ENCODE measurements at regions of chrX and their contacts with region 1.

Region 1: DNA sequence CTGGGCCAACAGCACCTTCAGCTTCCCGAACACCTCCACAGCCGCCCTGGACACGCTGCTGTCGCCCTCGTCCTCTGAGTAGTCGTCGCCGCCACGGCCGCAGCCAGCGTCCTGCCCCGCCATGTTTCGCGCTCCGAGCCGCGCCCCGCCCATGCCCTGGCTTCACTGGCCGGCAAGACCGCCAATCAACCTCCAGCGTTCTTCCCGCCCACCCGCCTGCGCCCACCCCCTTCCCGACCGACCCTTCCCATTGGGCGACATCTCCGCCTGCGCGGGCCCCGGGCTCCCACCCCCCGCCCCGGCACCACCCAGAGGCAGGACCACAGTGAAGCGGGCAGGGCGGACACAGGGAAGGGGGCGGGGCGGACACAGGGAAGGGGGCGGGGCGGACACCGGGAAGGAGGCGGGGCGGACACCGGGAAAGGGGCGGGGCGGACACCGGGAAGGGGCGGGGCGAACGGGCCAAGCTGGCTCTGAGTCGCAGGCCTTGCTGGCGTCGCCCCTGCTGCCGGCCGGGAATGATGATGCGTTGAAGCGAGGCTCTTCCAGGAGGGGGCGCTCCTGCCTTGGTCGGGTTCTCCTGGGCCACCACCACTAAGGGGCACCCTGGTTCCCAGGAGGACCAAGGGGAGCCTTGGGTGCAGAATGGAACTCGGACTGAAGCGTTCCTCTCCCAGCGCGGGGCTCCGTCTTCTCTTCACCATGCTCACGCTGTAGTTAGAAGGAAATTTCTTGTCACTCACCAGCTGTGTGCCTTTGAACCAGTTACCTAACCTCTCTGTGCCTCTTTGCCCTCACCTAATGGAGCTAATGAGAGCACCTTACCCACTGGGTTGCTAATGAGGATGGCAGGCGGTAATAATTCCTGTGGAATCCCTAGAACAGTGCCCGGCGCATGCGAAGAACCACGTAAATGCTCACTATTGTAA is at the start of gene HAUS7:
- DNase-seq: peak; percentile 61 to 94
- H3K4me3 ChIP-seq: peak within 1 kb of the TSS; percentile 55 to 69
- H3K27ac ChIP-seq: peak within 1 kb of the TSS; percentile 74 to 80
- H3K4me1 ChIP-seq: peaks cover 0 to 22% of the 10 kb centered on the region in 2 donors
- H3K27me3 ChIP-seq: no peaks in the 10 kb centered on the region
- CTCF ChIP-seq: peak; percentile 62 to 82 (median 81)
- total RNA-seq, gene HAUS7: 22.5 TPM

Region 2: GRCh38 chrX:153434801-153435200 is 35.9 kb before region 1 on chrX:
- intact Hi-C with region 1: no loop called
- DNase-seq: no peak
- H3K4me3 ChIP-seq: no peak overlapping the region
- H3K27ac ChIP-seq: no peak overlapping the region
- H3K4me1 ChIP-seq: no peaks in the 10 kb centered on the region
- H3K27me3 ChIP-seq: no peaks in the 10 kb centered on the region
- CTCF ChIP-seq: no peak

Region 3: DNA sequence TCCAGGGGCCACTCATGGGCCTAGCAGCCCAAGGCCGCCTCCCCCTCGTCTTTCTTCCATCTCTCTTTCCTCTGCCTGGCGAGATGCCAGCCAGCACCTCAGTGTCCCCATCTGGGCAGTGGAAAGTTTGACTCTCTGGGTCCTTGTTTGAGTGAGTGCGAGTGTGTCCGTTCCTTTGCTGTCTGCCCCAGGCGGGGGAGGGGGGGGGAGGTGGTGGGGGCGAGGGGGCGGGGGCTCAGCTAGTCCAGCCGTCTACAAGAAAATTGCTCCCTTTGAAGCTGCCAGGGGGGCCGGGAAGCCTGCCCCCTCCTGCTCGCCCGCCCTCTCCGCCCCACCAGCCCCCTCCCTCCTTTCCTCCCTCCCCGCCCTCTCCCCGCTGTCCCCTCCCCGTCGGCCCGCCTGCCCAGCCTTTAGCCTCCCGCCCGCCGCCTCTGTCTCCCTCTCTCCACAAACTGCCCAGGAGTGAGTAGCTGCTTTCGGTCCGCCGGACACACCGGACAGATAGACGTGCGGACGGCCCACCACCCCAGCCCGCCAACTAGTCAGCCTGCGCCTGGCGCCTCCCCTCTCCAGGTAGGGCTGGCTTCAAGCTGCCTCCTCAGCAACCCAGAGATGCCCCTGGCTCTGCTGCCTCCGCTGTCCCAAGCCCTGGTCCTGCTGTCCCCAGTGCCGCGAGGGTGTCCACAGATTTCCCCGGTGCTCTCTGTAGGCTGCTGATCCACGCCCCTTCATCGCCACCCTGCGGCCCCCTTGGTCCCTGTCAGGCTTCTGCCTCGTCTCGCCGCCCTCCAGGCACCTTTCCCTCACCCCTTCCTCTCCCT is 24.1 kb after region 1 on chrX and contains the start of gene BGN:
- intact Hi-C with region 1: loop called (anchors 1 kb)
- DNase-seq: peak in 1 of 2 donors; percentile 85
- H3K4me3 ChIP-seq: peak within 1 kb of the TSS; percentile 48 to 75
- H3K27ac ChIP-seq: peak within 1 kb of the TSS; percentile 76 to 87
- H3K4me1 ChIP-seq: peaks cover 14 to 22% of the 10 kb centered on the region in 2 donors
- H3K27me3 ChIP-seq: no peaks in the 10 kb centered on the region
- CTCF ChIP-seq: peak in 2 of 3 experiments; percentile 27 to 42
- total RNA-seq, gene BGN: 1,387 TPM

Region 4: DNA sequence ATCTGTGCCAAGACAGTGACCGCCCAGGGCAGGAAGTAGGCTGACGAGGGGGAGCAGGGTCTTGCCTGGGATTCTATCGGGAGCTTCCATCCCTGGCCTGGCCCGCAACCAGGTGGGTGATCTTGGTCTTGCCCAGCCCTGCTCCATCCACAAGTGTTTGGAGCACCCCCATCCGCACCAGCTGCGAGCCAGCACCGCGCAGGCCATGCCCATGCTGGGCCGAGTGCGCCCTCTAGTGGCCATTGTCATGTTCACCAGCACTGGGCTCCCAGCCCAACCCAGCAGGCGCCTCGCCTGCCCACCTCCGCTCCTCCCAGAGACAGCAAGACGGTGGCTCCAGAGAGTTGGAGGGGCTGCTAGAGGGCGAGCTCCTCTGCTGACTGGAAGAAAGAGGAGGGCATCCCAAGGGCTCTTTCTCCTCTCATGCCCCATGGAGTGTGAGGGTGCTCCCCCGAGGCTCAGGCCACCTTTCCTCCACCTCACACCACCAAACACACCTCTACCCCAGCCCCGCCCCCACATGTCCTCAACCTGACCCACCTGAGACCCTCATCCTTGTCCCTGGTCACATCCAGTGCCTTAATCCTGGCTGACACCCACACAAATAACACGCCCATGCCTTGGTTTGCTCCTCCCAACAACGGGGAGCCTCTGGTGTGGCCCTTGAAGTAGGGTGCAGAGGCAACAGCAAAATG is 36.9 kb after region 1 on chrX:
- intact Hi-C with region 1: loop called (anchors 1 kb)
- DNase-seq: peak in 1 of 2 donors; percentile 88
- H3K4me3 ChIP-seq: no peak overlapping the region
- H3K27ac ChIP-seq: peak overlapping the region in 1 of 2 donors; percentile 3
- H3K4me1 ChIP-seq: peaks cover 4 to 6% of the 10 kb centered on the region in 2 donors
- H3K27me3 ChIP-seq: no peaks in the 10 kb centered on the region
- CTCF ChIP-seq: peak; percentile 86 to 91 (median 87)

Region 5: DNA sequence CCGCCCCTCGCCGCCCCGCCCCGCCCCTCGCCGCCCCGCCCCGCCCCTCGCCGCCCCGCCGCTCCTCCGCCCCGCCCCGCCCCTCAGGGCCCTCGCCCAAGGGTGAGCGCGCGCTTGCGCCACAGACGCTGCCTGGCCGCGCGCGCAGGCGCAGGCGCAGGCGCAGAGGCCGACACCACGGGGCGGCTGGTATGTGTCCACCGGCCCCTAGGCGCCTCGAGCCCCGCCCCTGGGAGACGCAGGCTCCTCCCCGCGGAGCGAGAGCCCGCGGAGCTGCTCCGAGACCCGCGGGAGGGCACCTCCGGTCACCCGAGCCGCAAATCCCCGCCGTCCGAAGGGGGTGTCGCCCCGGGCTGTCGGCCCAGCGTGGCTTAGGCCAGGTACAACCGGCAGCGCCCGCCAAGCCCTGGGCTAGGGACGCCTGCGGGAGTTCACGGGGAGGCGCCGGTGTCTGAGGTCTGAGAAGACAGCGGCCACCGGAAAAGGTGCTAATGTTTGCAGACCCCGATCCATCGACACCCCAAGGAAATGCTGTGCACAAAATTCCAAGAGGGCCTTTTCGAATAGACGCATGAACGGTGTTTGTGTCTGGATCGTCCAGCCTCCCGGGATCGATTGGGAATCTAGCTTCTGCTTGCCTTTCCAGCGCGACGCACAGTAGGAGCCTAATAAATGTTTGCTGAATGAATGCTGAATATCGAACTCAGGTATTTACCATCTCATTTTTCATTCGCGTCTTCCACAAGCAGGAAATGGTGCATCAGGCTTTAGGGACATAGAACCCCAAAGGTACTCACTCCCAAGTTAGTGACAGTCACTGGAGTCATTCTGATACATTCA is 128.7 kb after region 1 on chrX:
- intact Hi-C with region 1: loop called (anchors 5 kb)
- DNase-seq: peak; percentile 50 to 91
- H3K4me3 ChIP-seq: peak overlapping the region; percentile 53 to 86
- H3K27ac ChIP-seq: peak overlapping the region; percentile 41 to 47
- H3K4me1 ChIP-seq: no peaks in the 10 kb centered on the region
- H3K27me3 ChIP-seq: no peaks in the 10 kb centered on the region
- CTCF ChIP-seq: no peak

Region 6: GRCh38 chrX:154378782-154379591 is 908.3 kb after region 1 on chrX and contains the start of gene EMD:
- intact Hi-C with region 1: loop called (anchors 10 kb)
- DNase-seq: peak; percentile 94 to 97
- H3K4me3 ChIP-seq: peak within 1 kb of the TSS; percentile 64 to 79
- H3K27ac ChIP-seq: peak within 1 kb of the TSS; percentile 97 to 98
- H3K4me1 ChIP-seq: peaks cover 2 to 14% of the 10 kb centered on the region in 2 donors
- H3K27me3 ChIP-seq: no peaks in the 10 kb centered on the region
- CTCF ChIP-seq: no peak
- total RNA-seq, gene EMD: 86.3 TPM